Activated CD4-positive, alpha-beta T cell treated with anti-CD3 and anti-CD28 coated beads for 36 hours (primary cell): ENCODE measurements at regions of chr4 and their contacts with region 1.

Region 1: DNA sequence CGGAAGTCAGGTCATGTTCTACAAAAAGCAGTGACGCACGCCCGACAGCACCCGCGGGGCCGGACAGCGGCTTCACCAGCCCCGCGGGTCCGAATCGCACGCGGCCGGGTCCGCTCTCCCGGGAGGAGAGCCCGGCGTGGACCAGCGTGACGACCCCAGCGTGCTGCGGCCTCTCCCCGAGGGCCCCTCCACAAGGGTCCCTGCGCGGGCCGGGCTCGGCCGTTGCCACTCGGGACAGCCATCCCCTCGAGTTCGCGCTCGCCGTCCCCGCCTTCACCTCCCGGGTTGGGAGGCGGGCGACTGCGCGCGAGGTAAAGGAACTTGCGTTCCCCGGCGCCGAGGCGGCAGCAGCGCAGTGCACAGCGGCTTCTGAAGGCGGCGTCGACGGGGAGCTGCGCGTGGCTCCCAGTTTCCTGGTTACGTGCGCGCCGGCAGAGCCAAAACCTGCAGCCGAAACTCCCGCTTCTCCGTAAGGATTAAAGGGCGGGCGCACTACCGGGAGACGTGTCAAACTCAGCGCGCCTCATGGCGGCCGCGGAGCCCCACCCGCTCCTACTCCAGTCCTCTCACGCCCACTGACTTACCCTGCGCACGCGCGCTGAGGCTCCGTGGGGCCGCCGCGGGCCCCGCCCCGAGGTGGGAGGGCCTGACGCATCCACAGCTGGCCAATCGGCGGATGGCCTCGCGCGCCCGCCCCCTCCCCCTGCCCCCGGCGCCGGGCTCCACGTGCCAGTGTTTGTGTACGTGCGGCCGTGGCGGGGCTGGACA is 416 bp upstream of the LRP2BP start:
- DNase-seq: peak; percentile 98
- ATAC-seq: peak; percentile 85
- H3K4me3 Mint-ChIP-seq: peak overlapping the region; percentile 94
- H3K27ac Mint-ChIP-seq: peak overlapping the region; percentile 97
- H3K4me1 Mint-ChIP-seq: peaks cover 37% of the 10 kb centered on the region
- H3K27me3 Mint-ChIP-seq: no peaks in the 10 kb centered on the region

Region 2: DNA sequence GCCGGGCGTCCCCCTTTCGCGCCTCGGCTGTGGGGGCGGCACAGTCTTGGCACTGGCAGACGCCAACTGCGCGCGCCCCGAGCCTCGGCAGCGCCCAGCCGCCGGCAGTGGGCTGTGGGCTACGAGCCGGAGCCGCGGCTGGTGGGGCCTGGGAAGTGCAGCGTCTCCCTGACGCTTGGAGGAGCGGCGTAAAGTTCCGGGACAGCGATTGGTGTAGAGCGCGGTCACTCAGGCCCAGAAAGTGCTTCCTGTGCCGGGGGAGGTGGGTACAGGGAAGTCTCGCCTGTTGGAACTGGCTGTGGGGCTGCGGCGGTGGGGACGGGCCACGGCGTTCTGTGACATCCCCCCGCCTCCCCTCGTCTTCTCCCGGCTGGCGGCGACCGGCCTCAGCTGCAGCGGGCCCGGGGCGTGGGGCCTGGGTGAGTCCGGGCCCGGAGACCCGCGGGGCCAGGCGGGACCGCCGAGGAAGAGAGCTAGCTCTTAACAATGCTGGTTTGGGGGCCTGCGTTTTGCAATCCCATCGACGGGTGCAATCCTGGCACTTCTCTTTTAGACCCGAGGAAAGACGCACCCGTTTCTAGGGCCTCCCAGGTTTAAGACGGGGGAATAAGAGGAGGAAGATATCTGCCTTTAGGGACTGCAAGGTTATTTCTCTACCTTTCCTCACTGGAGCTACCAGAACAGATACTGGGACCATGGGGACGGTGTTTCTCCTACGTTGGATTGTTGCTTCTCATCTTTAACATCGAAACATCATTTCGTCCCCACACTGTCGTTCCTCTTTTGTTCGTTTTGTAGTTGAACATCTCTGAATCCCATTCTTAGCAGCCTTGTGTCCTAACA is 1736.9 kb before region 1 on chr4 and contains the starts of genes RWDD4 and TRAPPC11:
- CTCF ChIA-PET with region 1: no interaction called
- POLR2A ChIA-PET with region 1: no interaction called
- intact Hi-C with region 1: loop called in 1 of 2 experiments (anchors 2 kb)
- DNase-seq: peak; percentile 97
- ATAC-seq: peak; percentile 100
- H3K4me3 Mint-ChIP-seq: peak within 1 kb of the TSS; percentile 97
- H3K27ac Mint-ChIP-seq: peak within 1 kb of the TSS; percentile 95
- H3K4me1 Mint-ChIP-seq: peaks cover 35% of the 10 kb centered on the region
- H3K27me3 Mint-ChIP-seq: no peaks in the 10 kb centered on the region
- total RNA-seq, gene RWDD4: 19.4 to 26.5 TPM
- total RNA-seq, gene TRAPPC11: 27.7 to 37.9 TPM

Region 3: DNA sequence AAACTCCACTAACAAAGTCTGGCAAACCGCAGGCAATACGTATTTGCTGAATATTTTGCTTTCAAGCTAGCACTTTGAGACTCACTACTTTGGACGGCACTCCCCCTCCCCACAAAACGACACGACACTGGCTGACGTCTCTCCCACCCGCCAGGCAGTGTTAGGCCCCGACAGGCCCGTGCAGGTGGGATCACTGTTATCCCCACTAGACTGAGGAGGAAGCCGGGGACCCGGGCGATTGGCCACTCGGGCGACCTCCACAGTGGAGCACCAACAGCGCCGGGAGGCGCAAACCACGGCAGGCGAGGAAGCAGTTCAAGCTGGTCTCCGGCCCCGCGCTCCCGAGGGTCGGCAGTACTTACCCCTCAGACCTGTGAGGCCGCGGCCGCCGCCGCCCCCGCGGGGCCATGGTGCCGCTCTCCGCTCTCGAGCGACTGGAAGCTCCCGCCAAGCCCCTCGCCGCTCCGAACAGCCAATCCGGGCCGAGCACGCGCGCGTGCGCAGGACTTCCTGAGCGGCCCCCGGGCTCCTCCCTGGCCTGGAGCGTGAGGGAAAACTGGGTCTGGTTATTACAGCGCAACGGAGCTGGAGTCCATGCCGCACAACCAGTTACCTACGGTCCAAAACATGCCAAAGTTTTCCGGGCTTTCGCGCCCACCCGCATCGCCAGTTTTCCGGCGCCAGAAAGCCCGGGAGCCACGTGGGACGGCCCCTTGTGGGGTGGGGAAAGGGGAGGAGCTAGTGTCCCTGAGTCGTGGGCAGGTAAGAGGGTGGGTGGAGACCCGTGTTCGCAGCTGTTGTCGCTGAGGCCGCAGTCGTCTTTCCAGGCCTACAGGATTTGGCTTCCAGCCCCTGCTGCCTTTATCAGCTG is 662.3 kb before region 1 on chr4 and contains the start of gene CENPU:
- CTCF ChIA-PET with region 1: no interaction called
- POLR2A ChIA-PET with region 1: no interaction called
- intact Hi-C with region 1: loop called in 1 of 2 experiments (anchors 1 kb)
- DNase-seq: peak; percentile 98
- ATAC-seq: peak; percentile 95
- H3K4me3 Mint-ChIP-seq: peak within 1 kb of the TSS; percentile 98
- H3K27ac Mint-ChIP-seq: peak within 1 kb of the TSS; percentile 94
- H3K4me1 Mint-ChIP-seq: peaks cover 24% of the 10 kb centered on the region
- H3K27me3 Mint-ChIP-seq: no peaks in the 10 kb centered on the region
- total RNA-seq, gene CENPU: 87.7 to 88.4 TPM

Region 4: DNA sequence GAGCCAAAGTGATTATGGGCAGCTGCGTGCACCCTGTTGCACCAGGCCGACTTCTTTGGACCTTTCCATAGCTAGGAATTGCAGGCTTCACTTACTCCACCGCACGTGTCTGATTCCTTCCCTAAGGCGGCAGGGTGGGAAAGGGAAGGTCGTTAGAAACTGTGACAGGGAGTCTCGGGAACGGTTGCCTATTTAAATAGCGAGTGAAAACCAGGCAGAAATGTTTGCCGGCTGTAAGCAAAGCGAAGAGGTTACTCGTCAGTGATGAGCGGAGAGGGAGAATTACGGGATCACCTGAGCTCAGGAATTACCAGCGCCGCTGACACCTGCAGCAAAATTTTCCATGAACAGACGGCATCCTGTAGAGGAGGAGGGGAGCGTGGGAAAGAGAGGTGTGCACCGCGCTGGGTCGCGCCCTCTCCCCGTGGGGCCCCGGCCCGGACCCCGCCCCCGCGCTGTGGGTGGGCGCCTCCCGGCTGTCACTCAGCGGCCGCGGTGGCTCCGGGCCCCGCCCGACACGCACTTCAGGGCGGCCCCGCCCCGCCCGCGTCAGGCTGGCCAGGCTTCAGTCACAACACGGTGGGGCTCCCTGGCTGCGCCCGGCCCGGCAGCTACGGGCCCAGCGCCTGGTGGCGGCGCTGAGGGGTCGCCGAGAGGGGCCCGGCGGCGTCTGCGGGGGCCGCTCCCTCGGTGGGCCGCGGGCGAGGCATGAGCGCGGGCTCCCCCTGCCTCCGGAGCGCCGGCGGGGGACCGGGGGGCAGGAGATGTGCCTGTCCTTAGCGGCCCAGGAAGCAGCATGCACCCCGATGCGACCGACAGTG is 186.9 kb before region 1 on chr4 and contains the start of gene SNX25:
- CTCF ChIA-PET with region 1: no interaction called
- POLR2A ChIA-PET with region 1: no interaction called
- intact Hi-C with region 1: loop called (anchors 1 kb)
- DNase-seq: peak; percentile 93
- ATAC-seq: peak; percentile 90
- H3K4me3 Mint-ChIP-seq: peak within 1 kb of the TSS; percentile 89
- H3K27ac Mint-ChIP-seq: peak within 1 kb of the TSS; percentile 78
- H3K4me1 Mint-ChIP-seq: peaks cover 35% of the 10 kb centered on the region
- H3K27me3 Mint-ChIP-seq: peaks cover 2% of the 10 kb centered on the region
- total RNA-seq, gene SNX25: 14.8 to 15.0 TPM

Region 5: DNA sequence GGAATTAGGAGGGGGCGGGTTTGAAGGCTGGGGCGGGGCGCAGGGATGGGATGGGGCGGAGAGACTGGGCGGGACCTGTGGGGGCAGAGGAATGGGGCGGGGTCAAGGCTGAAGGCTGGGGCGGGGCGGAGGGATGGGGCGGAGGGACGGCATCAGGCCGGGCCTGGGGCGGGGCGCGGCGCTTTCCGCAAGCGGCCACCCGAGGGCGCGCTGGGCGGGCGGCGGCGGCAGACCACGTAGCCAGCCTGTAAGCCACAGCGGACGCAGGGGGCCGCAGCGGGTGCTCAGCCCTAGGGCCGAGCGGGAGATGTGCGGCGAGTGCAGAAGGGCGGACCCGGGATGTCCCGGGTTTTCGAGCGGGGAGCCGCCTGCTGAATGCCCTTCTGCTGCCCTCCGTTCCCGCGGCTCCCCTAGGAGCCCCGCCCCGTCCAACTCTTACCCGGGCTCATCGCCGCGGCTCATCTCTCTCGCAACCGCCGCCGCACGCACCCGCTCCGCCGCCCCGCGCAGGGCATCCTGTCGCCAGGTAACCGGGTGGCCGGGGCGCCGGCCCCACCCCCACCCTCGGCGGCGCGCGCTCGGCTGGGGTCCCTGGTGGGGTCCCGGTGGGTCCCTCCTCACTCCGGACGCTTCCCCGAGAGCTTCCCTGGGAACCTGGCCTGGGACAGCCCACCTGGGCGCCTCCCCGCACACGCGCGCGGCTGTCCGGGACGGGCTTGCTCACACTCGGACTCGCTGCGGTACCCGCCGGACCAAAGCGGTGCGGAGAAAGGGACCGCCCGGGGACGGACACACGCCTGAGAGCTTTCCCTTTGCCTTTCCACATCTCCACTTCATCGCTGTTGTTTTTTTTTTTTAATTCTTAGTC is 75.3 kb after region 1 on chr4 and contains the start of gene CCDC110:
- CTCF ChIA-PET with region 1: no interaction called
- POLR2A ChIA-PET with region 1: no interaction called
- intact Hi-C with region 1: loop called (anchors 1 kb)
- DNase-seq: peak; percentile 98
- ATAC-seq: peak; percentile 97
- H3K4me3 Mint-ChIP-seq: peak within 1 kb of the TSS; percentile 82
- H3K27ac Mint-ChIP-seq: peak within 1 kb of the TSS; percentile 75
- H3K4me1 Mint-ChIP-seq: peaks cover 4% of the 10 kb centered on the region
- H3K27me3 Mint-ChIP-seq: peaks cover 9% of the 10 kb centered on the region
- total RNA-seq, gene CCDC110: 0.34 to 0.40 TPM

Region 6: DNA sequence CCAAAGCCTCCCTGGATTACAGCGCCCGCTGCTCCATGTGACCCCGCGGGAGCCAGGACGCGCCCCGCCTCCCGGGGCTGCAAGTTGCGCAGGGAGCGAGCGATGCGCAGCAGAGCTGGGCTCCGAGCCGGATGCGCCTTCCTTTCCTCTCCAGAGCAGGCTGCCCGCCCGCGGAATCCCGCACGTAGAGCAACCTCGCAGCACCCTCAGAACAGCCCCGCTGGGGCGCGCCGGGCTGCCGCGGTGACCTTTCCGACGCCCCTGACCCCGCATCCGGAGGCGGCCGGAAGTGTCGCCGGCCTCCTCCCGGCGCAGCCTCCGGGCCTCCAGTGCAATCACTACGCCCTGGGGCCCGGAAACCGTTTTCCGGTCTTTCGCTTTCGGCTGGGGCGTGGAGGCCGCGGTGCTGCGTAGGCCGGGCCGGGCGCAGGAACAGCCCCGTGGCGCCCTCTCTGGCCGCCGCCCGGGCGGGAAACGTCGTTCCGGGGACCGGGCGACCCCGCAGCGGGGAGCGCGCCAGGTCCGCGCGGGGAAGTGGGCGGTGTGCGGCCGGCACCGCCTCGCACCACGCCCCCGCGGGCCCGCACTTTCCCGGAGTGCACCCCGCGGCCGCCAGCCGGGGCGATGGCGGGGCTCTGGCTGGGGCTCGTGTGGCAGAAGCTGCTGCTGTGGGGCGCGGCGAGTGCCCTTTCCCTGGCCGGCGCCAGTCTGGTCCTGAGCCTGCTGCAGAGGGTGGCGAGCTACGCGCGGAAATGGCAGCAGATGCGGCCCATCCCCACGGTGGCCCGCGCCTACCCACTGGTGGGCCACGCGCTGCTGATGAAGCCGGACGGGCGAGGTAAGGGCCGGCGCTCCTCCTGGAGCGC is 795.3 kb after region 1 on chr4 and contains the start of gene CYP4V2:
- CTCF ChIA-PET with region 1: no interaction called
- POLR2A ChIA-PET with region 1: no interaction called
- intact Hi-C with region 1: loop called in 1 of 2 experiments (anchors 1 kb)
- DNase-seq: peak; percentile 93
- ATAC-seq: peak; percentile 84
- H3K4me3 Mint-ChIP-seq: peak within 1 kb of the TSS; percentile 85
- H3K27ac Mint-ChIP-seq: peak within 1 kb of the TSS; percentile 94
- H3K4me1 Mint-ChIP-seq: peaks cover 37% of the 10 kb centered on the region
- H3K27me3 Mint-ChIP-seq: no peaks in the 10 kb centered on the region
- total RNA-seq, gene CYP4V2: 4.1 to 4.5 TPM